AG04449 (cell line): ENCODE measurements at regions of chr14 and their contacts with region 1.

Region 1: DNA sequence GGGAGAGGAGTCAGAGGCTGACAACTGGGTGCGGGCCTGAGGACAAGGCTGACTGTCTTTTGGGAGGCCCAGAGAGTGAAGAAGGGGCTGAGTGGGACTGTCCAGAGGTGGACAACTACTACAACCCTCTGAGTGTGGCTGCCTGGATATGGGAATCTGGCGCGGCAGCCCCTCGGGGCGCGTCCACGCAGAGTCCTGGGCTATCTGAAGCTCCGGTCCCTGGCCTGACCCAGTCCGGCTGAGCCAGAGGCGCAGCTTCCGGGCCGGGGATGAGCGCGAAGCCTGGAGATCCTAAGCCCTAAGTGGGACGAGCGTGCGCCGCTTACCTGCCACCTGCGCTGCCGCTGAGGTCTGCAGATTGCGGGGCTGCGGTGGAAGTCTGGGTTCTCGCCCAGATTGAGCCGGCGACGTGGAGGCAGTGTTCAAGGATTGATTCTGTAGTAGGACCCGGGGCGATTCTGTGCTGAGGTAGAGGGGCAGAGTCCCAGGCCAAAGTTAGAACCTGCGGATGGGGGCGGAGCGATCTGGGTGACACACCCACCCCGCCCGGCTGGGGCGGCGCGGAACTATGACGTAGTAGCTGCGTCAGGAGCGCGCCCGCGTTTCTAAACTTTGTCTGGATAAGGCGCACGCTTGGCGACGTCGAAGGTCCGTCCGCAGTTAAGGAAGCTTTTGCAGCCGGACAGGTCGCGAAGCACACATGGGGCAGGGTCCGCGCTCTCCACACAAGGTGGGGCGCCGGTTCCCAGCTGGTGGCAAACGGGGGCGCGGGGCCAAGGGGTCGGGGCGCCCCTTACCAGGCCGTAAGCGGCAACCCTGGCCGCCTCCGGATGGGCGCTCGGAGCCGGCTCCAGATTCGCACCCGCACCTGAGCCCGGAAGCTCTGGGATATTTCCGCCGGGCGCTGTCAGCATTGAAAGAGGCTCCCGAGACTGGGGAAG is at the starts of genes DHRS1 and NOP9:
- DNase-seq: peak; percentile 24
- H3K4me3 ChIP-seq: peak within 1 kb of the TSS; percentile 99
- CTCF ChIP-seq: no peak

Region 2: GRCh38 chr14:24108336-24108874 is 191.1 kb before region 1 on chr14:
- CTCF ChIA-PET with region 1: interaction called, 15 read pairs
- POLR2A ChIA-PET with region 1: no interaction called
- DNase-seq: no peak
- H3K4me3 ChIP-seq: no peak overlapping the region
- CTCF ChIP-seq: no peak

Region 3: DNA sequence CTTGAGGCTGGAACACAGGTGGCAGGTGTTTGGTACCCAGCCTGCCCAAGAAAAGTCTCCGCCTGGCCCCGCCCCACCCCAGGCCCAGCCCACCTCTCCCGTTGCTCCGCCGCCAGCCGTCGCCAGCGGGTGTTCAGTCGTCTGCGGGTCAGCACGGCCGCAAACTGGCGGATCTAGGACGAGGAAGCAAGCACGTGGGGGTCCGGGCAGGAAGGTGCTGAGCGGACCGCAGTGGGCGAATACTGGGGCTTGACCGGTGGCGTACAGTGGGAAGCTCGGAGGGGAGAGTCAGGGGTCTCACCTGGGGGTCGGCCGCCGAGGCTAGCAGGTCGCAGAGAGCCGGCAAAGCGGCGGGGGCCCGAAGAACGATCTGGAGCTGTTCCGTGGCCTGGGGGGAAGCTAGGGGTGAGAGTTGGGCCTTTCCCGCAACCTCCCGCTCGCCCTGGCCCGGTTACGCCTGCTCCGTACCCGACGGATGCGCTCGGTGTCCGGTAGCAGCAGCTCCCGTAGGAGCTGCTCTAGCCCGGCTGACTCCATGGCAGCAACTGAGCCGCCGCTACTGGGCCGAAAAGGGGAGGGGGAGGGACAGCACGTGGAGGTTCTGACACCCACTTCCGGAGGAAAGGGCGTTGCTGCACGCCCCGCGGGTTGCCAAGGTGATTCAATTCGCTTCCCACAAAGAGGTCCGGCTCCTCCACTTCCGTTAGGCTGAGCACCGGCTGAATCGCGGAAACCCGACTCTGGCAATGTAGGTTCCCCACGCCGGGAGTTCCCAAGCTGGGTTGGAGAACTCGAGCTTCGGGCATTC is 111.1 kb before region 1 on chr14 and contains the start of gene IPO4:
- CTCF ChIA-PET with region 1: interaction called, 21 read pairs
- POLR2A ChIA-PET with region 1: interaction called, 3 read pairs
- DNase-seq: peak; percentile 90
- H3K4me3 ChIP-seq: peak within 1 kb of the TSS; percentile 84
- CTCF ChIP-seq: no peak

Region 4: GRCh38 chr14:24215495-24216344 is 83.8 kb before region 1 on chr14 and contains the start of gene MDP1:
- CTCF ChIA-PET with region 1: interaction called, 89 read pairs
- POLR2A ChIA-PET with region 1: interaction called, 4 read pairs
- DNase-seq: peak; percentile 33
- H3K4me3 ChIP-seq: peak within 1 kb of the TSS; percentile 90
- CTCF ChIP-seq: peak; percentile 70

Region 5: GRCh38 chr14:24251880-24252288 is 47.6 kb before region 1 on chr14:
- CTCF ChIA-PET with region 1: interaction called, 315 read pairs
- POLR2A ChIA-PET with region 1: no interaction called
- DNase-seq: no peak
- H3K4me3 ChIP-seq: no peak overlapping the region
- CTCF ChIP-seq: no peak

Region 6: GRCh38 chr14:24332268-24332993 is 32.9 kb after region 1 on chr14:
- CTCF ChIA-PET with region 1: interaction called, 688 read pairs
- POLR2A ChIA-PET with region 1: no interaction called
- DNase-seq: no peak
- H3K4me3 ChIP-seq: no peak overlapping the region; the same call in 1 of the 2 replicates
- CTCF ChIP-seq: peak; percentile 77